HepG2 (cell line): ENCODE measurements at regions of chr3 and their contacts with region 1.

Region 1: GRCh38 chr3:129421988-129422745 is 6.3 kb downstream of the EFCAB12 start:
- DNase-seq: no peak
- ATAC-seq: peak; percentile 34; the same call in 1 of the 3 replicates
- H3K4me3 ChIP-seq: no peak overlapping the region
- H3K27ac ChIP-seq: no peak overlapping the region
- H3K4me1 ChIP-seq: peaks cover 73% of the 10 kb centered on the region
- H3K27me3 ChIP-seq: no peaks in the 10 kb centered on the region; a peak in 1 of 5 replicates
- CTCF ChIP-seq: peak; percentile 52
- EP300 ChIP-seq: no peak
- POLR2A ChIP-seq: no peak
- RAD21 ChIP-seq: no peak

Region 2: GRCh38 chr3:129383292-129383860 is 38.8 kb before region 1 on chr3:
- CTCF ChIA-PET with region 1: interaction called, 4 read pairs
- POLR2A ChIA-PET with region 1: interaction called, 3 read pairs
- in situ Hi-C with region 1: no loop called
- intact Hi-C with region 1: loop called (anchors 1 kb)
- DNase-seq: peak; percentile 74
- ATAC-seq: peak; percentile 94
- H3K4me3 ChIP-seq: no peak overlapping the region
- H3K27ac ChIP-seq: no peak overlapping the region
- H3K4me1 ChIP-seq: peaks cover 28% of the 10 kb centered on the region
- H3K27me3 ChIP-seq: no peaks in the 10 kb centered on the region
- CTCF ChIP-seq: peak; percentile 93
- EP300 ChIP-seq: no peak
- POLR2A ChIP-seq: no peak
- RAD21 ChIP-seq: peak; percentile 95

Region 3: GRCh38 chr3:129596194-129597086 is 174.3 kb after region 1 on chr3:
- CTCF ChIA-PET with region 1: no interaction called
- POLR2A ChIA-PET with region 1: no interaction called
- in situ Hi-C with region 1: no loop called
- intact Hi-C with region 1: no loop called
- DNase-seq: peak; percentile 91
- ATAC-seq: peak; percentile 72
- H3K4me3 ChIP-seq: peak overlapping the region; percentile 35 to 70 (median 45)
- H3K27ac ChIP-seq: peak overlapping the region; percentile 94
- H3K4me1 ChIP-seq: peaks cover 91% of the 10 kb centered on the region
- H3K27me3 ChIP-seq: no peaks in the 10 kb centered on the region
- CTCF ChIP-seq: 0 out of 2 replicates have a peak, but pooled peaks have one; percentile 5
- EP300 ChIP-seq: peak in 1 of 2 experiments; percentile 61; a peak in 2 of 4 replicates
- POLR2A ChIP-seq: peak in 1 of 2 experiments; percentile 53; a peak in 1 of 4 replicates
- RAD21 ChIP-seq: no peak